ENCODE measurements at regions of chr4 and their contacts with region 1.

Region 1: GRCh38 chr4:57093845-57094831 is 16.0 kb downstream of the IGFBP7 start:
- DNase-seq: no peak
- H3K4me3 ChIP-seq: no peak overlapping the region
- H3K27me3 ChIP-seq: no peaks in the 10 kb centered on the region
- CTCF ChIP-seq: no peak

Region 2: GRCh38 chr4:57117491-57117890 is 23.4 kb after region 1 on chr4:
- CTCF ChIA-PET with region 1: no interaction called
- POLR2A ChIA-PET with region 1: interaction called, 11 read pairs
- DNase-seq: no peak
- H3K4me3 ChIP-seq: no peak overlapping the region
- H3K27me3 ChIP-seq: no peaks in the 10 kb centered on the region
- CTCF ChIP-seq: no peak